MCF 10A (cell line): ENCODE measurements at regions of chr14 and their contacts with region 1.

Region 1: DNA sequence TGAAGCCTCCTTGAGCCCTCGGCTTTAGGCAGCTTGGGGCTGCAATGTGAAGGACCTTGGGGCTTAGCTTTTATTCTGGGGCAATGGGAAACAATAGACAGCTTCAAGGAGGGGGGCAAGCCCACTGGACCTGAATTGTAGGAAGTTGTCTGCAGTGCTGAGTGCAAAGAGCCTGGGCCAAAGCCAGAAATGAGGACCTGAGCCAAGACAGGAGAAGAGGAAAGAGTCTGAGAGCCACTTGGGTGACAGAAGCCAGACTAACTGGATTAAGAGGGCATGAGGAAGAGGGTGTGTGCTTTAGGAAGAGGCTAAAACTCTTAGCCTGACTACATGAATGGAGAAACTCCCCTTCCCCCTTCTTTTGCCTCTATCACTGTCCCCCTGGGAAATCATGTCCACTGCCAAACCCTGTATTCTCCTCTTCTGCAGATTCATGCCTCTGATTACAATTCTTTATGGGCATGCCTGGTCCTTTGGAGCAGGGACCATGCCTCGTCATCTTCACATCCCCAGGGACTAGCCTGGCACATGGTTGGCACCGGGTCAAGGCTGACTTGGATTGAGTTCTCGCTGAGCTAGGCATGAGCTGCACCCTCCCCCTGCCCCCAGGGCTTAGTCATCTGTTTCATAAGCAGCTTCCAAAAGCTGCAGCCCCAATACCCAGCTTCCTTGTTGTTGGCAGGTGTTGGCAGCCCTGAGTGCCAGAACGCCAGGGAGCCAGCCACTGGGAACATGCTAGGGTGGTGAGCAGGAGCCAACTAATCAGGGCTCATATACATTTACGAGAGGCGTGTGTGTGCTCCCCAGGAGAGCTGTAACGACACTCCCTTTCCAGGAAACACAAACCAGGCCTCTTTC is 27.8 kb upstream of the JDP2 start:
- DNase-seq: peak; percentile 100
- H3K4me3 Mint-ChIP-seq: no peak overlapping the region
- H3K27ac Mint-ChIP-seq: peak overlapping the region; percentile 90
- H3K4me1 Mint-ChIP-seq: peaks cover 25% of the 10 kb centered on the region
- H3K27me3 Mint-ChIP-seq: peaks cover 11% of the 10 kb centered on the region
- CTCF ChIP-seq: no peak

Region 2: DNA sequence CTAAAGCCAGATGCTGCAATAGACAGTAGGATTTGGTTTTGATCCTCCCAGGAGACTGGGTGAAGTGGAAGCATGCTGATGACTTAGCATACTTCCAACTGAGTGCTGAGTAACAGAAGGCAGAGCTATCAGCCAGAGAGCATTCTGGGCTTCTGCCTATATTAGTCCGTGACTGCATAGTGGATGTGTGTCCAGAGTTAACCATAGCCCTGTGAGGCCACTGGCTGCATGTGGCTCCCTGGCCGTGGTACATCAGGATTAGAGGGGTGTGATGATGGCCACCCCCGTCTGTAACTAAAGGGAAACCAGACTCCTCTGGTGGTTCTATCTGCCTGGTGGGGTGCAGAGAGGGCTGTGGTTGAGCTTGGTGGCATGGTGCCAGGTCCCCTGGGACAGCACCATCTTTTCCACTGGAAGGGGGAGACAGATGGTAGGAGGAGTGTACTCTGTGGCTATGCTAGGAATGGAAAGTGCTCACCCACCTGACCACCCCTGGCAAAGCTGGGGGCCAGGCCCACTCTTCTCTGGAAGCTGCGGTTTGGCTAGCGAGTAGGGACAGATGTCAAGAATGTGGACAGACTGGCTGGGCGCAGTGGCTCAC is 1124.7 kb before region 1 on chr14:
- CTCF ChIA-PET with region 1: no interaction called
- POLR2A ChIA-PET with region 1: no interaction called
- intact Hi-C with region 1: no loop called
- DNase-seq: no peak
- H3K4me3 Mint-ChIP-seq: no peak overlapping the region
- H3K27ac Mint-ChIP-seq: no peak overlapping the region
- H3K4me1 Mint-ChIP-seq: peaks cover 6% of the 10 kb centered on the region
- H3K27me3 Mint-ChIP-seq: peaks cover 14% of the 10 kb centered on the region
- CTCF ChIP-seq: no peak

Region 3: DNA sequence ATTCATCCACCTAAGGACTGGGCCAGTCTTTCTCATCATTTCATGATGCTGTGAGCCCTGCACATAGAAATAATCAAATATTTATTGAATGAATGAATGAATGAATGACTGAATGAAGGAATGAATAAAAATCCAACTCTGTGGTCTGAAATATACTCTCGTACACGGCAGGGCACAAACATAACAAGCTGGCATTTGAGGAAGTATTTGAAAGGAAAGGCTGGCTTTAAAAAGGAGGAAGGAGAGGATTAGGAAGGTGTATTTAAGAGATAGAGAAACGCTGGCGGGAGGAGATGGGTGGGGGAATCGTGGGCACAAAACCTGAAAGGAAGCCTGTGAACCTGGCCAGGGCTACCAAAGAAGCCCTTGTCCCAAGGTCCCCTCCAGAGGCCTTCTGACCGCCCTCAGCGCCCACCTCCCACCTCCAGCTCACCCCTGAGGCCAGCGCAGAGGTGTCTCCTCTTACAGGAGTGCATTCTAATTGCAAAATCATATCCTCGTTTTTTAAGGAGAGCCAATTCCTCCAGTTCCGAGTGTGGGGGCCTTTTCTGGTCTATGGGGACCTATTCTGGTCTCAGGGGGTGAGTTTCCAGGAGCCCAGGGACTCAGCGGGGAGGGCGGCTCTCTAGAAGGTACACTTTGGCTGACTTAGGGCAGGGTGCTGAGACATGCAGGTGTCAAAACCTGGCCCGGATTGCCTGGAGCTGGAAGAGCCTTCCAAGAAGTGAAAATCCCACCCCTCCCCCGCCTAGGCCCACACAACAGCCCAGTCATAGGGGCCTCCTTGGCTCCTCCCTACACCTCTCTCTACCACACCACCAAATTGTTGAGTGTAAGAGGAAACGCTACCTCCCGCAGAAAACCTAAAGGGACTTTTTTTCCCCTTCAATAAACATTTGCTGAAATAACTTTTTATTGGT is 19.1 kb after region 1 on chr14:
- CTCF ChIA-PET with region 1: no interaction called
- POLR2A ChIA-PET with region 1: interaction called, 22 read pairs
- intact Hi-C with region 1: no loop called
- DNase-seq: peak; percentile 46
- H3K4me3 Mint-ChIP-seq: peak overlapping the region; percentile 0
- H3K27ac Mint-ChIP-seq: peak overlapping the region; percentile 6
- H3K4me1 Mint-ChIP-seq: peaks cover 30% of the 10 kb centered on the region
- H3K27me3 Mint-ChIP-seq: no peaks in the 10 kb centered on the region
- CTCF ChIP-seq: no peak

Region 4: DNA sequence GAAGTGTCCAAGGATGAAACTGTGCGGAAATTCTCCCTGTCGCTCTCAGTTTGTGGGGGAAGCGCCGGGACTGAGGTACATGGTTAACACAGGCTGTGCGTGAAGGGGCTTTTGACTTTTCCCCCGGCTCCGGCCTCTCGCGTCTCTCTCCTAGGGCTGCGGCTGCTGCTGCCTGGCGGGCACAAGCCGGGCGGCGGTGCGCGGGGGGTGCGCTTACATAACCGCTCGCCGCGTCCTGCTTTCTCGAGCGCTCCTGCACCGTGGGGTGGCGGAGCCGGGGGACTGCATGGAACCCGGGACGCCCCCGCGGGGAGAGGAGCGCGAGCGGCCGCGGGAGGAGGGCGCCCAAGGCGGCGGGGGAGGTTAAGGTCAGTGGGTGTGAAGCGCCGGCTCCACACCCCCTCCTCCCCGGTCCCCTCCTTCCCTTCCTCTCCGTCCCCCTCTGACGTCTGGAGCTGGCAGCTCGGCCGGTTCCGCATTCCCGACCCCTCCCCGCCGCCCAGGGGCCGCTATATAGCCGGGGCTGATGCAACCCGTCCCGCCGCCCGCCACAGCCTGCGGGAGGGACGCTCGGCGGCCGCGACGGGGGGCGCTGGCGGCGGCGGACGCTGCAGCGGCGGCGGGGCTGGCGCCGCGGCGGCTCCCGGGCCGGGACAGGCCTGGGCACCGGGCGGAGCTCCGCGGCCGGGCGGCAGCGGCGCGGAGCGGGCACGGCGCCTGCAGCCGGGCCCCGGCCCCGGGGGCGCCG is 27.6 kb after region 1 on chr14 and contains the start of gene JDP2:
- CTCF ChIA-PET with region 1: interaction called, 3 read pairs
- POLR2A ChIA-PET with region 1: interaction called, 13 read pairs
- intact Hi-C with region 1: no loop called
- DNase-seq: peak; percentile 62
- H3K4me3 Mint-ChIP-seq: peak within 1 kb of the TSS; percentile 76
- H3K27ac Mint-ChIP-seq: no peak within 1 kb of the TSS
- H3K4me1 Mint-ChIP-seq: peaks cover 17% of the 10 kb centered on the region
- H3K27me3 Mint-ChIP-seq: no peaks in the 10 kb centered on the region
- CTCF ChIP-seq: no peak
- total RNA-seq, gene JDP2: 38.9 and 45.3 TPM in 2 replicates